Left ventricle myocardium inferior (tissue), 1 donor: ENCODE measurements at regions of chr14 and their contacts with region 1.

Region 1: DNA sequence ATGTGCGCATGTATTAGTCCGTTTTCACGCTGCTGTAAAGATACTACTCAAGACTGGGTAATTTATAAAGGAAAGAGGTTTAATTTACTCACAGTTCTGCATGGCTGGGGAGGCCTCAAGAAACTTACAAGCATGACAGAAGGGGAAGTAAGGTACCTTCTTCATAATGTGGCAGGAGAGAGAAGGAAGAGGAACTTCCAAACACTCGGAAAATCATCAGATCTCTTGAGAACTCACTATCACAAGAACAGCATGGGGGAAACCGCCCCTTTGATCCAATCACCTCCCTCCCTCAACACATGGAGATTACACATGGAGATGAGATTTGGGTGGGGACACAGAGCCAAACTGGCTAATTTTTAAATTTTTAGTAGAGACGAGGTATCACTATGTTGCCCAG is 41.8 kb upstream of the SNX6 start:
- DNase-seq: no peak
- H3K4me3 ChIP-seq: no peak overlapping the region
- H3K27ac ChIP-seq: no peak overlapping the region
- H3K4me1 ChIP-seq: no peaks in the 10 kb centered on the region
- H3K27me3 ChIP-seq: no peaks in the 10 kb centered on the region
- CTCF ChIP-seq: no peak

Region 2: GRCh38 chr14:34722717-34723545 is 51.2 kb after region 1 on chr14:
- intact Hi-C with region 1: loop called (anchors 5 kb)
- DNase-seq: no peak
- H3K4me3 ChIP-seq: no peak overlapping the region
- H3K27ac ChIP-seq: no peak overlapping the region
- H3K4me1 ChIP-seq: no peaks in the 10 kb centered on the region
- H3K27me3 ChIP-seq: no peaks in the 10 kb centered on the region
- CTCF ChIP-seq: peak; percentile 90